ENCODE measurements at regions of chr12 and their contacts with region 1.

Region 1: GRCh38 chr12:93419388-93420034 is 22.2 kb downstream of the UBE2N start:
- DNase-seq: peak; percentile 72
- ATAC-seq: peak; percentile 74
- H3K4me3 ChIP-seq: no peak overlapping the region
- H3K4me3 Mint-ChIP-seq: peak overlapping the region; percentile 29
- H3K27ac ChIP-seq: peak overlapping the region in 1 of 2 donors; percentile 8
- H3K27ac Mint-ChIP-seq: peak overlapping the region; percentile 23
- H3K4me1 ChIP-seq: peaks cover 38 to 60% of the 10 kb centered on the region in 2 donors
- H3K4me1 Mint-ChIP-seq: peaks cover 83% of the 10 kb centered on the region
- H3K27me3 ChIP-seq: no peaks in the 10 kb centered on the region
- H3K27me3 Mint-ChIP-seq: no peaks in the 10 kb centered on the region
- CTCF ChIP-seq: peak; percentile 78

Region 2: DNA sequence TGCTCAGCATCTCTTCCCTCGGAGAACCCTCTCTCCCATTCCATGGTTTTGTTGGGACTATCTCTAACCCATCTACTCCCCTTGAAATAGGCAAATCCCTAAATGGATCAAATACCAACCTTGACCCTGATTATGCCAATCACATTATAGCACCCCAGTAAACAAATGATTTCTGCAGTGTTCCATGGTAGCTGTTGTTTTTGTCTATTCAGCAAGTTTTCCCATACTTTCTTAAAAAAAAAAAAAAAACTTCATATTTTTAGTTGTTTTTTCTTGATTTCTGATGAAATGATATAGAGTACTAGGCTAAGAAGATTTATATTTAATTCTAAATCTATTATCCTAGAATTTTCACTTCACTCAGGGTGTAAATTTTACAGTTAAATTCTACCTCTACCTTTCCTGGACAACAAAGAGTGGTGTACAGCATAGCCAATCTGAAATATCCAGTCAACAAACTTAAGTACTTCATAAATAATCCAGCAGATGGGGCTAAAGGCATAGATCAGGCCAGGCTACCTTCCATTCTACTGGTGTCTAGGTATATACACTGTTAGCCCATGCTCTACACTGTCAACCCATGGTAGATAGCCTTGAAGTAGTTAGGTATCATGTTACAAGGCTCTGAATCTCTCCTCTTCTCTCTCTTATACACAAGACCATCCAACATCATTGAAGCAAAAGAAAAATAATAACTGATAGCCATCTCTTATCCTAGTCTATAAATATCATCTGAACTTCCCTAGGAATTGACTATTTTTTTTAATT is 634.5 kb before region 1 on chr12:
- CTCF ChIA-PET with region 1: interaction called, 53 read pairs
- POLR2A ChIA-PET with region 1: interaction called, 7 read pairs
- intact Hi-C with region 1: loop called (anchors 1 kb)
- DNase-seq: peak; percentile 75
- ATAC-seq: peak; percentile 98
- H3K4me3 ChIP-seq: no peak overlapping the region
- H3K4me3 Mint-ChIP-seq: no peak overlapping the region
- H3K27ac ChIP-seq: no peak overlapping the region
- H3K27ac Mint-ChIP-seq: no peak overlapping the region
- H3K4me1 ChIP-seq: no peaks in the 10 kb centered on the region
- H3K4me1 Mint-ChIP-seq: no peaks in the 10 kb centered on the region
- H3K27me3 ChIP-seq: no peaks in the 10 kb centered on the region
- H3K27me3 Mint-ChIP-seq: no peaks in the 10 kb centered on the region
- CTCF ChIP-seq: peak; percentile 81

Region 3: DNA sequence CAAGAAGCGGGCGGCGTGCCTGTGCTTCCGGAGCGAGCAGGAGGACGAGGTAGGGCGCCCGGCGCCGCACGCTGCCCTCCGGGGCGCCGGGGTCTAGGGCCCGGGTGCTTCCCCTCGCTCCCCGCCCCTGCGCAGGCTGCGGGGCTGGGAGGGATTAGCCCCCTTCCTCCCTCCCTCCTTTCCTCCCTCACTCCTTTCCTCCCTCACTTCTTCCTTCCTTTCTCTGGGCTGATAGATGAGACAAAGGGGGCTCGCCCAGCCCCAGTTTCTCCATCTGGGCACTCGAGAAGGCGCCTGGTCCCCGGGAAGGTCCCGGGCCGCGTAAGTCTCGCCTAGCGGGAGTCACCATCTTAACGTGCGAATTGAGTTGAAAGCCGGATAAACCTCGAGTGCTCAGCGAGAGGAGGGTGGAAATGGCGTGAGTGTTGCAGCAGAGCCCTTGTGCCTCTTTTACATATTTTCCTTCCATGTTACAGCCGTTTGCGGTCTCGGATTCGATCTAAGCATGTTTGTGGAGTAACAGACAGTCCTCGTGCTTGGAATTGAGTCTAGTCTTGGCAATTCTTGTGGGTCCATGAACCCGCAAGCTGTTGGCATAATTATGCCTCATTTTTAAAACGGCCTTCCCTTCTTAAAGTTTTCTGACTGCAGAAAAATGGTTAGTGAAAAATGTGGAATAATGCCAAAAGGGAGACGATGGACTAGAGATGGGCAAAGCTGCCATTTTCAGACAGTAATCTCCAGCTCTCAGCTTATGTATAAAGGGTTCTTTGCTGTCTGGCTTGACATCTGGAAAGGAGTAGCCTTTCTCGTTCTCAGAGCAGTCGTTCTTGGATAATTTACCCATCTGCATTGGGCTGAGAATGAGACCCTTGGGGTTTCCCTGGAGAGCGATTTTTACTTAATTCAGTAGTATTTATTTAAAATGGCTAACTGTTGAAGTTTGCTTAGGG is 40.9 kb before region 1 on chr12:
- CTCF ChIA-PET with region 1: interaction called, 7 read pairs
- POLR2A ChIA-PET with region 1: no interaction called
- intact Hi-C with region 1: loop called (anchors 2 kb)
- DNase-seq: peak; percentile 76
- ATAC-seq: peak; percentile 44
- H3K4me3 ChIP-seq: peak overlapping the region; percentile 73 to 96 (median 86)
- H3K4me3 Mint-ChIP-seq: peak overlapping the region; percentile 98
- H3K27ac ChIP-seq: peak overlapping the region; percentile 75 to 89
- H3K27ac Mint-ChIP-seq: peak overlapping the region; percentile 98
- H3K4me1 ChIP-seq: peaks cover 20 to 29% of the 10 kb centered on the region in 2 donors
- H3K4me1 Mint-ChIP-seq: peaks cover 40% of the 10 kb centered on the region
- H3K27me3 ChIP-seq: no peaks in the 10 kb centered on the region
- H3K27me3 Mint-ChIP-seq: no peaks in the 10 kb centered on the region
- CTCF ChIP-seq: no peak

Region 4: GRCh38 chr12:93403988-93404803 is 15.3 kb before region 1 on chr12:
- CTCF ChIA-PET with region 1: interaction called, 15 read pairs
- POLR2A ChIA-PET with region 1: no interaction called
- intact Hi-C with region 1: no loop called
- DNase-seq: no peak
- ATAC-seq: no peak
- H3K4me3 ChIP-seq: no peak overlapping the region
- H3K4me3 Mint-ChIP-seq: no peak overlapping the region
- H3K27ac ChIP-seq: no peak overlapping the region
- H3K27ac Mint-ChIP-seq: peak overlapping the region; percentile 37
- H3K4me1 ChIP-seq: no peaks in the 10 kb centered on the region
- H3K4me1 Mint-ChIP-seq: no peaks in the 10 kb centered on the region
- H3K27me3 ChIP-seq: no peaks in the 10 kb centered on the region
- H3K27me3 Mint-ChIP-seq: no peaks in the 10 kb centered on the region
- CTCF ChIP-seq: no peak

Region 5: GRCh38 chr12:93441617-93442410 is 22.3 kb after region 1 on chr12 and contains the start of gene UBE2N:
- CTCF ChIA-PET with region 1: interaction called, 34 read pairs
- POLR2A ChIA-PET with region 1: interaction called, 7 read pairs
- intact Hi-C with region 1: loop called (anchors 2 kb)
- DNase-seq: peak; percentile 97
- ATAC-seq: peak; percentile 85
- H3K4me3 ChIP-seq: peak within 1 kb of the TSS; percentile 65 to 92 (median 84)
- H3K4me3 Mint-ChIP-seq: peak within 1 kb of the TSS; percentile 94
- H3K27ac ChIP-seq: peak within 1 kb of the TSS; percentile 88 to 97
- H3K27ac Mint-ChIP-seq: peak within 1 kb of the TSS; percentile 96
- H3K4me1 ChIP-seq: peaks cover 41 to 46% of the 10 kb centered on the region in 2 donors
- H3K4me1 Mint-ChIP-seq: peaks cover 48% of the 10 kb centered on the region
- H3K27me3 ChIP-seq: no peaks in the 10 kb centered on the region
- H3K27me3 Mint-ChIP-seq: no peaks in the 10 kb centered on the region
- CTCF ChIP-seq: no peak
- total RNA-seq, gene UBE2N: 81.7 and 83.8 TPM in 2 replicates